ENCODE measurements at regions of chr1 and their contacts with region 1.

Region 1: DNA sequence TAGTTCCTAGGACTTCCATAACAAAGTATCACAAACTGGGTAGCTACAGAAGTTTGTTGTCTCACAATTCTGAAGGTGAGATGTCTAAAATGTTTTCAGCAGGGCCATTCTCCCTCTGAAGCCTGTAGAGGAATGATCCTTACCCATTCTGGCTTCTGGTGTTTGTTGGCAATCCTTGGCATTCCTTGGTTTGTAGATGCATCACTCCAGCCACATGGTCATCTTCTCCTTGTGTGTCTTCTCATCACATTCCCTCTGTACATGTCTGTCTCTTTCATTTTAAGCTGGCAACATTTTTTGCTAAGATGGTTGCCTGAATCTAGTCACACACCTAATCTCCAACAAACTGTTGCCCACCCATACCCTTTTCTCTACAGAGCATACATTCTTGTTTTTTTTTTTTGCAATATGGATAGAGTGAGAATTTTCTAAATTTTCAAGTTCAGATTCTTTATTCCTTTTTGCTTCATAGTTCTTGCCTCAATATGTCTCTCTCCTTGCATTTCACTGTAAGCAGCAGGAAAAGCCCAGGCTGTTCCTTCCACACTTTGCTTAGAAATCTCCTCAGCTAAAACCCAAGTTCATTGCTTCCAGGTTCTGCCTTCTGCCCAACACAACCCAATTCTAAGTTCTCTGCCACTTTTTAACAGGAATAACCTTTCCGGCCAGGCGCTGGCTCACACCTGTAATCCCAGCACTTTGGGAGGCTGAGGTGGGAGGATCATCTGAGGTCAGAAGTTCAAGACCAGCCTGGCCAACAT is 18.3 kb downstream of the ZBED6 start:
- DNase-seq: no peak
- ATAC-seq: no peak
- H3K4me3 ChIP-seq: no peak overlapping the region
- H3K27ac ChIP-seq: no peak overlapping the region
- H3K4me1 ChIP-seq: peaks cover 0 to 4% (median 0%) of the 10 kb centered on the region in 12 donors
- H3K27me3 ChIP-seq: no peaks in the 10 kb centered on the region
- CTCF ChIP-seq: no peak
- POLR2A ChIP-seq: no peak

Region 2: GRCh38 chr1:203638950-203639349 is 174.8 kb before region 1 on chr1:
- intact Hi-C with region 1: no loop called
- DNase-seq: peak in 3 of 5 donors; percentile 36 to 51 (median 48)
- ATAC-seq: peak; percentile 54 to 88 (median 72)
- H3K4me3 ChIP-seq: no peak overlapping the region
- H3K27ac ChIP-seq: peak overlapping the region in 11 of 12 donors; percentile 38 to 90 (median 62)
- H3K4me1 ChIP-seq: peaks cover 24 to 91% (median 78%) of the 10 kb centered on the region in 12 donors
- H3K27me3 ChIP-seq: no peaks in the 10 kb centered on the region
- CTCF ChIP-seq: peak in 9 of 12 donors; percentile 11 to 44 (median 25)
- POLR2A ChIP-seq: no peak

Region 3: GRCh38 chr1:203843435-203843834 is 29.7 kb after region 1 on chr1:
- intact Hi-C with region 1: loop called in 1 of 10 experiments (anchors 5 kb)
- DNase-seq: no peak
- ATAC-seq: no peak
- H3K4me3 ChIP-seq: no peak overlapping the region
- H3K27ac ChIP-seq: no peak overlapping the region
- H3K4me1 ChIP-seq: peaks cover 0 to 7% (median 0%) of the 10 kb centered on the region in 12 donors
- H3K27me3 ChIP-seq: no peaks in the 10 kb centered on the region
- CTCF ChIP-seq: no peak
- POLR2A ChIP-seq: no peak

Measured in heart left ventricle (tissue), 16 donors.